H1 (cell line): ENCODE measurements at regions of chr1 and their contacts with region 1.

Region 1: DNA sequence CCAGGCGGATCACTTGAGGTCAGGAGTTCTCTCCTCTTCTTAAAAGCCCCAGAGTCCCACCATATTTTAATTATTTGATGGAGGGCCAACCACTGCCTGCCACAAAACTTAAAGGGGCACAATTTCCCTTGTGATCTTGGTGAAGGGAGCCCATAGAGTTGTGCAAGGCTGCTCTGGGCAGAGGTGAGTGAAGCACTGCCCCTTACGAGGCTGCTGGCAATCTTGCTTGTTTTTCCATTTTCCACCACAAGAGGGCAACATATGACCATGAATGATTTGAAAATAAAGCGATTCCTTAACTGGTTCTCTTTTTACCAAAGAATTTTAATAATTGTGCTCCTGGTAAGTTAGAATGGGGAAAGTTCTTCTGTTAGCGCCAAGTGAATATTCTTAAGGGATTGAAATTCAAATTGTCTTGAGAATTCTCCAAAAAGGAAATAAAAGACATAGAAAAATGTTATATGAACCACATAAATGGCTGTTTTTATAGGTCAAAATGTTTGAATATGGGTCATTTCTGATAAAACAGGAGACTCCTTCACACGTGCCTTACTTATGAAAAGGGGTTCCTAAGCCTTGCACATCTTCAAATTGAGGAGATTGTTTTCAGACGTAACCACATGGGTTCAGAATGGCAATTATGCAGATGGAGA is 22.7 kb downstream of the PGM1 start:
- DNase-seq: peak in 1 of 2 experiments; percentile 78
- H3K4me3 ChIP-seq: no peak overlapping the region
- H3K27ac ChIP-seq: no peak overlapping the region
- H3K4me1 ChIP-seq: peaks cover 0 to 12% (median 0%) of the 10 kb centered on the region in 4 experiments; a peak in 1 of 7 replicates
- H3K27me3 ChIP-seq: no peaks in the 10 kb centered on the region
- CTCF ChIP-seq: peak; percentile 31 to 72 (median 59)
- EP300 ChIP-seq: no peak
- POLR2A ChIP-seq: no peak
- RAD21 ChIP-seq: peak; percentile 84 to 85

Region 2: GRCh38 chr1:63557365-63557987 is 58.4 kb before region 1 on chr1:
- CTCF ChIA-PET with region 1: interaction called, 12 read pairs
- POLR2A ChIA-PET with region 1: no interaction called
- DNase-seq: peak in 1 of 2 experiments; percentile 72
- H3K4me3 ChIP-seq: no peak overlapping the region
- H3K27ac ChIP-seq: no peak overlapping the region
- H3K4me1 ChIP-seq: peaks cover 0 to 4% (median 0%) of the 10 kb centered on the region in 4 experiments; a peak in 1 of 7 replicates
- H3K27me3 ChIP-seq: no peaks in the 10 kb centered on the region
- CTCF ChIP-seq: peak; percentile 12 to 71 (median 71)
- EP300 ChIP-seq: no peak
- POLR2A ChIP-seq: no peak
- RAD21 ChIP-seq: peak; percentile 64 to 76

Region 3: GRCh38 chr1:63575340-63575826 is 40.5 kb before region 1 on chr1:
- CTCF ChIA-PET with region 1: interaction called, 14 read pairs
- POLR2A ChIA-PET with region 1: no interaction called
- DNase-seq: no peak
- H3K4me3 ChIP-seq: no peak overlapping the region
- H3K27ac ChIP-seq: no peak overlapping the region
- H3K4me1 ChIP-seq: peaks cover 0 to 14% (median 12%) of the 10 kb centered on the region in 4 experiments
- H3K27me3 ChIP-seq: no peaks in the 10 kb centered on the region
- CTCF ChIP-seq: peak in 2 of 3 experiments; percentile 20 to 36; a peak in 2 of 4 replicates
- EP300 ChIP-seq: no peak
- POLR2A ChIP-seq: no peak
- RAD21 ChIP-seq: no peak

Region 4: DNA sequence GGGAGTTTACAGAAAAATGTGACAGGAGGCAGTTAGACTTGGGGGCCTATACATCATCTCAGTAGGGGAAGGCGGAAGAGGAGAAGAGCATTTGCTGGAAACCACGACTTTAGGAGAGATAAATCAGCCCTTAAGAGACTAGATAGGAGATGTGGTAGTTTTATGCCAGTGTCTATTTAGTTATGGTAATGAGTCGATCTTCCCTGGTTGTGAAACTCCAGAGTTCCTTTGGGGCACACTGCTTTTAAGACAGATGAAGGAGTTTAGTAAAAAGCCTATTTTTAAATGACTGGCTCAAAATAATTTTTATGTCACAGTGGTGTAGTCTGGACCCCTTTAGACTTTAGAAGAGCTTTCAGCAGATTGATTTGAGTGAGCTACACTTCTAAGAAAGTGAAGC is 14.8 kb before region 1 on chr1:
- CTCF ChIA-PET with region 1: interaction called, 10 read pairs
- POLR2A ChIA-PET with region 1: interaction called, 3 read pairs
- DNase-seq: no peak
- H3K4me3 ChIP-seq: no peak overlapping the region
- H3K27ac ChIP-seq: no peak overlapping the region
- H3K4me1 ChIP-seq: peaks cover 0 to 4% (median 0%) of the 10 kb centered on the region in 4 experiments; a peak in 2 of 7 replicates
- H3K27me3 ChIP-seq: no peaks in the 10 kb centered on the region; a peak in 1 of 7 replicates
- CTCF ChIP-seq: no peak
- EP300 ChIP-seq: no peak
- POLR2A ChIP-seq: no peak
- RAD21 ChIP-seq: no peak

Region 5: DNA sequence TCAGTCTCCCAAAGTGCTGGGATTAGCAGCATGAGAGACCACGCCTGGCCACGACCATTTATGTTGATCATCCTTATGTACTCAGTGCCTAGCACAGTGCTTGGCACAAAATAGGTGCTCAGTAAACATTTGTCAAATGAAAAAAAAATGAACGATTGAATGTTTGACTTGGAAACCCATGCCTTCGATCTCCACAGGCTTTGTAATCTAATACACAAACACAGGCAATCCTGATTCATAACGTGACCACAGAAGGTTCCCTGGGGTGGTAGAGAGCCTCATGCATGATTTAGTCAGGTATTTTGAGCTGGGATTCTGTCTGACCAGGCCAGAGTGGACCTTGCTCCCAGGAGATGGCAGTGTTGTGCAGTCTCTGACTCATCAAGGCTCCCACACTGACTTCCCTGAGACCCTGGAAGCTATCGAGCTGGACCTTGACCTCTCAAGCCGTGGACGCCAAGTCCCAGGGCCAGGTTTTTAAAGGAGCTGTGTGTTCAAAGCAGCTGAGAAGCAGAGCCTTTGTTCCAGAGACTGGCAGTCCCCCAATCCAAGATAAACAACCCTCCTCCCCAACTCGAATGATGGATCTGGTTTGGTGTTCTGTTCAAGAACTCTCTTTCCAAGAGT is 58.5 kb after region 1 on chr1:
- CTCF ChIA-PET with region 1: interaction called, 14 read pairs
- POLR2A ChIA-PET with region 1: no interaction called
- DNase-seq: peak; percentile 54 to 79
- H3K4me3 ChIP-seq: no peak overlapping the region
- H3K27ac ChIP-seq: no peak overlapping the region
- H3K4me1 ChIP-seq: peaks cover 0 to 3% (median 0%) of the 10 kb centered on the region in 4 experiments; a peak in 2 of 7 replicates
- H3K27me3 ChIP-seq: 0 out of 7 replicates have a peak, but pooled peaks cover 0 to 2% (median 0%) of the 10 kb centered on the region in 4 experiments
- CTCF ChIP-seq: peak; percentile 83 to 96 (median 88)
- EP300 ChIP-seq: no peak
- POLR2A ChIP-seq: no peak
- RAD21 ChIP-seq: peak; percentile 97 to 98

Region 6: DNA sequence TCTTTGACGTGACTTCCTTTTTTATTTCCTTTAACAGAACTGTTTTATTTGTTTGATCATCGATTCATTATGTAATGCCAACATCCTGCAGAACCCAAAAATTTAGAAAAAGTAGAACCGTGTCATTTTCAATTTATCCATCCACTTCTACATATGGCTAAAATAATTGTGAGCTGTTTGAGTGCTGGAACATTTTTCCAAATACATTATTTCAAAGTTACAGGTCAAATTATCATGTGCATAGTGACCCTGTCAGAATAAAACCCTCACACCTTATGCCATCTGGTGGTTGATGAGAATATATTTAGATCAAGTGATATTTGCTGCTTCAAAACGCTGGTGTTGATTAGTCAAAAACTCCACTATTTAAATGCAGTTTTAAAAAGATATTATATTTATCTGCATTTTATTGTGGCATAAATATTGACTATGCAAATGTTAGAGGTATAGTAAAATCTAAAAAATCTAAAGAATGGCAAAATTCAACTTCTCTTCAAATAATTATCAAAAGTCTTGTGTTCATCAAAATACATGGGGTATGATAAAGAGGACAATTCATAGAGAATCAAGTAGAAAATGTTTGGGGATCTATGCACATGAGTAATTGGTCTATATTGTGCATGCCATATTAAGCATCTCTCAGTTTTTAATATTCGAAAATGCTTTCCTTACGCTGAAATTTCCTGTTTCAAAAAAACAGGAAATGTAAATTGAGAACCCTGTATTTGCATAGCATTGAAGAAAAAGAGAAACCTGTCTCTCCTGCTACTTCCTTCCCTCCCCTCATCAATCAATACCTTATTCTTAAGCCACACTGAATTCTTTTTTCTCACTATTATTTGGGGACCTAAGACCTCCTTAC is 627.2 kb after region 1 on chr1:
- CTCF ChIA-PET with region 1: interaction called, 18 read pairs
- POLR2A ChIA-PET with region 1: no interaction called
- DNase-seq: no peak
- H3K4me3 ChIP-seq: peak overlapping the region in 1 of 4 experiments; percentile 10; a peak in 1 of 8 replicates
- H3K27ac ChIP-seq: no peak overlapping the region
- H3K4me1 ChIP-seq: peaks cover 6 to 15% (median 11%) of the 10 kb centered on the region in 4 experiments; a peak in 5 of 7 replicates
- H3K27me3 ChIP-seq: no peaks in the 10 kb centered on the region
- CTCF ChIP-seq: peak in 2 of 3 experiments; percentile 33 to 39; a peak in 2 of 4 replicates
- EP300 ChIP-seq: no peak
- POLR2A ChIP-seq: no peak
- RAD21 ChIP-seq: peak; percentile 70 to 74